ENCODE measurements at regions of chr3 and their contacts with region 1.

Region 1: DNA sequence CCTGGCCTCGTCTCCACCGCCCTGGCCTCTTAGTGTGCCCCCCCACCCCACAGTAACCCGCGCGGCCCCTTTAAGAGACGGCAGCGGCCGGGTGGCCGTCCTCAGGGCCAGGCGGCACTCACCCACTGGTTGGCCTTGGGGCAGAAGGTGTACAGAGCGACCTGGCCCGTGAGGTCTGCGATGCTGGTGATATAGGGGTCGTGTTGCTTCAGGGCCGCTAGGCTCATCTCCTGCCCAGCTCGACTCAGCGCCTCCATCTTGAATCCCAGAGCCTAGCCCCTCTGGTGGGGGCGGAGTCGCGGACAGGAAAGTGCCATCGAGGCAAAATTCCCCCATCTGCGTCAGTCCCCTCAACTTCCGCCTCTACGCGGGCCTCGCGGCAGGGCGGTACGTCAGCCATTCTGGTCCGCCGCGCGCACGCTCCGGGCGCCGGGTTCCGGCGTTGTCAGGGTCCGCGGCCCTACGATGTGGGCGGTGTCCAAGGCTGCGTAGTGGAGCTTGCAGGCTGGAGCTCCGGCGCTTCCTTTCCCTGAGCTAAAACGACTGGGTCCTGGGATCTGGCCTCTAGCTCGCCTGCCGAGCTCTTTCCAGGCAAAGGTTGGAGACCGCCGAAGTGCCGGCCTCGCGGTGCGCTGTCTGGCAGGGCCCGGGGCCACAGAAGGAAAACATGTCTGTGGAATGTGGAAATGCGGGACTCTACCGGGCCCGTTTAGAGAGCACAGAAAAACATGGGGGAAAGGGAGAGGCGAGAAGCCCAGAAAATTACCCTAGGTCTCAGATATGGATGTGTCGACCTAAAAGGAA is at the start of gene DCP1A:
- DNase-seq: peak; percentile 92 to 94
- ATAC-seq: peak; percentile 98
- H3K4me3 ChIP-seq: peak within 1 kb of the TSS; percentile 93 to 99 (median 98)
- H3K27ac ChIP-seq: peak within 1 kb of the TSS; percentile 97 to 99 (median 98)
- H3K4me1 ChIP-seq: peaks cover 9 to 30% of the 10 kb centered on the region in 2 donors
- H3K27me3 ChIP-seq: no peaks in the 10 kb centered on the region
- CTCF ChIP-seq: peak in 1 of 5 experiments; percentile 17
- POLR2A ChIP-seq: peak; percentile 87 to 88
- total RNA-seq, gene DCP1A: 10.9 to 18.4 (median 15.2) TPM

Region 2: DNA sequence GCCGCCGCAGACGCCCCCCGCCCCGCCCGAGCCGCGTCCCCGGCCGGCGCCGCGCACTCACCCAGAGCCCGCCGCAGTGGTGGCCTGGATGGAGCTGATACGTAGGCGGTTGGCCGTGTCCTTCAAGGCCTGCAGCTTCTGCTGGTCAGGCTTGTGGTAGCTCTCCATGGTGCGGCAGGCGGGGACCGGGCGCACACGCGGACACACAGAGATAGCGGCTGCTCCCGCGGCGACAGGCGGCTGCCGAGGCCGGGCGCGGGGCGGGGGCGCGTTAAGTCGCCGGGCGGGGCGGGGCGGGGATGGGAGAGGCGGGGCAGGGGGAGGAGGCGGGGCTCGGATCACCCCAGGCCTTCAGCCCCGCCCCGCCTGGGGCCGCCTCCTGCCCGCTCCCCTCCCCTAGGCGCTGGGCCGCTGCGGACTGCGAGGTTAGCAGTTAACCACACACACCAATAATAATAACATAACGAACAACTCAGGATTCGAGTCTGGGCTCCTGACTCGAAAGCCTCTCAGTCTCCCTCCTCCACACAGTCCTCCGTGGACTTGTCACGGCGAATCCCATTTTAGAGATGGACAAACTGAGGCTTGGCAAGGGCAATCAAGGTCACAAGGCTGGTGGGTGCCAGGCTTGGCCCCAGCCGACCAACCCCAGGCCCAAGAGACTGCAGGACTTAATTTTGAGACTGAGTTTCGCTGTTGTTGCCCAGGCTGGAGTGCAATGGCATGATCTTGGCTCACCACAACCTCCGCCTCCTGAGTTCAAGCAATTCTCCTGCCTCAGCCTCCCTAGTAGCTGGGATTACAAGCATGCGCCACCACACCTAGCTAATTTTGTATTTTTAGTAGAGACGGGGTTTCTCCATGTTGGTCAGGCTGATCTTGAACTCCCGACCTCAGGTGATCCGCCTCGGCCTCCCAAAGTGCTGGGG is 91.4 kb before region 1 on chr3 and contains the start of gene TKT:
- in situ Hi-C with region 1: no loop called
- intact Hi-C with region 1: loop called (anchors 5 kb)
- DNase-seq: peak; percentile 70 to 77
- ATAC-seq: peak; percentile 66 to 68
- H3K4me3 ChIP-seq: peak within 1 kb of the TSS; percentile 75 to 92 (median 84)
- H3K27ac ChIP-seq: peak within 1 kb of the TSS; percentile 83 to 95 (median 85)
- H3K4me1 ChIP-seq: peaks cover 39 to 41% of the 10 kb centered on the region in 2 donors
- H3K27me3 ChIP-seq: no peaks in the 10 kb centered on the region
- CTCF ChIP-seq: no peak
- POLR2A ChIP-seq: peak; percentile 79 to 85
- total RNA-seq, gene TKT: 18.5 to 41.3 (median 23.8) TPM

Region 3: GRCh38 chr3:53320697-53321096 is 26.8 kb before region 1 on chr3:
- in situ Hi-C with region 1: no loop called
- intact Hi-C with region 1: loop called (anchors 2 kb)
- DNase-seq: peak; percentile 48 to 85
- ATAC-seq: peak; percentile 99
- H3K4me3 ChIP-seq: no peak overlapping the region
- H3K27ac ChIP-seq: peak overlapping the region; percentile 81 to 86 (median 82)
- H3K4me1 ChIP-seq: peaks cover 50 to 60% of the 10 kb centered on the region in 2 donors
- H3K27me3 ChIP-seq: no peaks in the 10 kb centered on the region
- CTCF ChIP-seq: peak; percentile 51 to 63 (median 58)
- POLR2A ChIP-seq: no peak

Region 4: GRCh38 chr3:53881691-53882593 is 534.5 kb after region 1 on chr3 and contains the start of gene ACTR8:
- in situ Hi-C with region 1: loop called in 1 of 4 experiments (anchors 25 kb)
- intact Hi-C with region 1: no loop called
- DNase-seq: peak; percentile 72 to 73
- ATAC-seq: peak; percentile 91
- H3K4me3 ChIP-seq: peak within 1 kb of the TSS; percentile 97 to 100 (median 98)
- H3K27ac ChIP-seq: peak within 1 kb of the TSS; percentile 87 to 93 (median 90)
- H3K4me1 ChIP-seq: peaks cover 13 to 16% of the 10 kb centered on the region in 2 donors
- H3K27me3 ChIP-seq: no peaks in the 10 kb centered on the region
- CTCF ChIP-seq: peak in 3 of 5 experiments; percentile 18 to 24 (median 19)
- POLR2A ChIP-seq: peak; percentile 58
- total RNA-seq, gene ACTR8: 13.6 to 24.9 (median 19.8) TPM